CD4-positive, alpha-beta memory T cell (primary cell): ENCODE measurements at regions of chr3 and their contacts with region 1.

Region 1: GRCh38 chr3:107676469-107677309 is 153.9 kb downstream of the BBX start:
- DNase-seq: peak in 4 of 5 donors; percentile 14 to 33 (median 32)
- H3K4me3 ChIP-seq: no peak overlapping the region
- H3K4me3 Mint-ChIP-seq: no peak overlapping the region
- H3K27ac ChIP-seq: no peak overlapping the region
- H3K27ac Mint-ChIP-seq: no peak overlapping the region
- H3K4me1 ChIP-seq: peaks cover 3% of the 10 kb centered on the region
- H3K4me1 Mint-ChIP-seq: peaks cover 16 to 23% (median 21%) of the 10 kb centered on the region in 4 donors
- H3K27me3 ChIP-seq: no peaks in the 10 kb centered on the region
- H3K27me3 Mint-ChIP-seq: no peaks in the 10 kb centered on the region

Region 2: GRCh38 chr3:107690522-107691138 is 13.9 kb after region 1 on chr3:
- CTCF ChIA-PET with region 1: interaction called, 44 read pairs
- POLR2A ChIA-PET with region 1: interaction called, 3 read pairs
- intact Hi-C with region 1: no loop called
- DNase-seq: peak in 4 of 5 donors; percentile 28 to 42 (median 34)
- H3K4me3 ChIP-seq: no peak overlapping the region
- H3K4me3 Mint-ChIP-seq: no peak overlapping the region
- H3K27ac ChIP-seq: no peak overlapping the region
- H3K27ac Mint-ChIP-seq: peak overlapping the region in 1 of 7 donors; percentile 83
- H3K4me1 ChIP-seq: peaks cover 11% of the 10 kb centered on the region
- H3K4me1 Mint-ChIP-seq: peaks cover 9 to 20% (median 12%) of the 10 kb centered on the region in 4 donors
- H3K27me3 ChIP-seq: no peaks in the 10 kb centered on the region
- H3K27me3 Mint-ChIP-seq: no peaks in the 10 kb centered on the region

Region 3: GRCh38 chr3:107753480-107753879 is 76.8 kb after region 1 on chr3:
- CTCF ChIA-PET with region 1: interaction called, 13 read pairs
- POLR2A ChIA-PET with region 1: no interaction called
- intact Hi-C with region 1: no loop called
- DNase-seq: peak in 1 of 5 donors; percentile 8
- H3K4me3 ChIP-seq: no peak overlapping the region
- H3K4me3 Mint-ChIP-seq: no peak overlapping the region
- H3K27ac ChIP-seq: no peak overlapping the region
- H3K27ac Mint-ChIP-seq: peak overlapping the region in 2 of 7 donors; percentile 18 to 34
- H3K4me1 ChIP-seq: no peaks in the 10 kb centered on the region
- H3K4me1 Mint-ChIP-seq: peaks cover 0 to 4% (median 2%) of the 10 kb centered on the region in 4 donors
- H3K27me3 ChIP-seq: no peaks in the 10 kb centered on the region
- H3K27me3 Mint-ChIP-seq: no peaks in the 10 kb centered on the region

Region 4: DNA sequence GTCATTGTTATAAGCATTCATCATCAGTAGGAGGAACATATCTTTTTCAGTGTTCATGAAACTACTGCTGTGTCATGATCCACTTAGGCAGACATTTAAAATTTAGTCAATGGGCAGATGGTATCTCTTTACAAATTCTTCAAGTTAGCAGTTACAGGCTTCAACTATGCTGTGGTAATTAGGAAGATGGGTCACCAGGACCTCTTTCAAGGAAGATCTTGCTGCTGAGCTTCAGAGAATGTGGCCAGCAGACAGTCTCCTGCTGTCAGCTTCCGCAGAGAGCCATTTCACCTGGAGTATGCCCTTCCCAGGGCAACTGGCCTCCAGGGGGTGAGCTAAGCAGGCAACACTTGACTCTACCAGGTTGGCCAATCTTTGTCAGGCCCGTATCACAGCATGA is 526.1 kb after region 1 on chr3:
- CTCF ChIA-PET with region 1: no interaction called
- POLR2A ChIA-PET with region 1: no interaction called
- intact Hi-C with region 1: no loop called
- DNase-seq: no peak
- H3K4me3 ChIP-seq: no peak overlapping the region
- H3K4me3 Mint-ChIP-seq: no peak overlapping the region
- H3K27ac ChIP-seq: no peak overlapping the region
- H3K27ac Mint-ChIP-seq: peak overlapping the region in 1 of 7 donors; percentile 13
- H3K4me1 ChIP-seq: no peaks in the 10 kb centered on the region
- H3K4me1 Mint-ChIP-seq: peaks cover 5 to 17% (median 9%) of the 10 kb centered on the region in 4 donors
- H3K27me3 ChIP-seq: no peaks in the 10 kb centered on the region
- H3K27me3 Mint-ChIP-seq: no peaks in the 10 kb centered on the region

Region 5: GRCh38 chr3:108406661-108407206 is 730.0 kb after region 1 on chr3:
- CTCF ChIA-PET with region 1: interaction called, 3 read pairs
- POLR2A ChIA-PET with region 1: no interaction called
- intact Hi-C with region 1: loop called (anchors 5 kb)
- DNase-seq: peak in 3 of 5 donors; percentile 24 to 61 (median 48)
- H3K4me3 ChIP-seq: no peak overlapping the region
- H3K4me3 Mint-ChIP-seq: no peak overlapping the region
- H3K27ac ChIP-seq: no peak overlapping the region
- H3K27ac Mint-ChIP-seq: peak overlapping the region in 1 of 7 donors; percentile 8
- H3K4me1 ChIP-seq: no peaks in the 10 kb centered on the region
- H3K4me1 Mint-ChIP-seq: peaks cover 0 to 2% (median 0%) of the 10 kb centered on the region in 4 donors
- H3K27me3 ChIP-seq: no peaks in the 10 kb centered on the region
- H3K27me3 Mint-ChIP-seq: no peaks in the 10 kb centered on the region

Region 6: GRCh38 chr3:108552267-108553159 is 875.8 kb after region 1 on chr3:
- CTCF ChIA-PET with region 1: no interaction called
- POLR2A ChIA-PET with region 1: no interaction called
- intact Hi-C with region 1: loop called (anchors 10 kb)
- DNase-seq: peak in 4 of 5 donors; percentile 38 to 50 (median 39)
- H3K4me3 ChIP-seq: no peak overlapping the region
- H3K4me3 Mint-ChIP-seq: peak overlapping the region in 1 of 8 donors; percentile 14
- H3K27ac ChIP-seq: no peak overlapping the region
- H3K27ac Mint-ChIP-seq: peak overlapping the region in 2 of 7 donors; percentile 6 to 38
- H3K4me1 ChIP-seq: no peaks in the 10 kb centered on the region
- H3K4me1 Mint-ChIP-seq: peaks cover 4 to 7% (median 7%) of the 10 kb centered on the region in 4 donors
- H3K27me3 ChIP-seq: no peaks in the 10 kb centered on the region
- H3K27me3 Mint-ChIP-seq: no peaks in the 10 kb centered on the region